ENCODE measurements at regions of chr3 and their contacts with region 1.

Region 1: DNA sequence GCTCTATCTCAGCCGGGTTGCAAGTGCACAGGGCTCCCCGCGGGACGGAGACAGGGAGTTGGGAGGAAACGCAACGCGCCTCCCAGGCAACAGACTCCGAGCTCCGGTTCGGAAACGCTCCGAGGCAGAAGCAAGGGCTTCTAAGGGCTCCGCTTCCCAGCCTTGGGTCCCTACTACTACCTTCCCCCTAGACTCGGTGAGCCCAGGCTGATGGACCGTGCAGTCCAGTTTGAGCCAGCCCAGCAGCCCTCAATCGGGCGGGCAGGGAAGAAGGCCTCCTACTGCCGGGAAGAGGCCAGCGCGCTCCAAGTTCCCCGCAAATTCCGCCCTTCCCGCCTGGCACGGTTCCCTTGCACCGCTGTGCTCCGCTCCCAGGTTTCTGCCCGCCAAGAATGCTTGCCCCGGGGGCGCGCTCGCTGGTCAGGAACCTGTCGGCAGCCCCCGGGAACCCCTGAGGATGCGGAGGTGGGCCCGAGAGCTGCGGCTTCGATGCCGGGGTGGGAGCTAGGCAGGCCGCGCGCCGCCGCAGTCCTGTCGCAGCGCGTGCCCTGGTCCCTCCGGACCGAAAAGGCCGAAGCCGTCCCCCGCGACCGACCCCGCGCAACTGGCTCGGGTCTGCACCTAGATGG is 728 bp downstream of the TRANK1 start:
- DNase-seq: peak; percentile 15
- H3K4me3 ChIP-seq: peak overlapping the region; percentile 60
- CTCF ChIP-seq: peak; percentile 14

Region 2: DNA sequence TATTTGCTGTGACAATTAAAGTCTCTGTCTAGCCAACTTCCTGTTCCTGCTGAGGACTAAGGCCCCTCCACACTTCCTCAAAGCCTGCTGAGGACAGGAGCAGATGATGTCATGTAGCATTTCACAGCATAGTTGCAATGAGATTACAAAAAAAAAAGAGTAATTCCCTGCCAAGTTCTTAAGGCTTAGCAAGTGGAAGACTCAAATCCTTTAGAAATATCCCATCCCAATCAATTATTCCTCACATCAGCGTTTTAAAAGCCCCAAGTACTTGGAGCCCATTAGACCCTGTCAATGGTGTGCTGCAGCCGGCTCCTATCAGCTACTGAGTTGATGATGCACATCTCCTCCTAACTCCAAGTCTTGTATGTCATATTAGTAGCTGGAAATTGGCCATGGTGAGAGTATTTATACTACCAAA is 51.0 kb before region 1 on chr3:
- in situ Hi-C with region 1: loop called (anchors 5 kb)
- DNase-seq: peak; percentile 33
- H3K4me3 ChIP-seq: no peak overlapping the region
- CTCF ChIP-seq: no peak

Region 3: DNA sequence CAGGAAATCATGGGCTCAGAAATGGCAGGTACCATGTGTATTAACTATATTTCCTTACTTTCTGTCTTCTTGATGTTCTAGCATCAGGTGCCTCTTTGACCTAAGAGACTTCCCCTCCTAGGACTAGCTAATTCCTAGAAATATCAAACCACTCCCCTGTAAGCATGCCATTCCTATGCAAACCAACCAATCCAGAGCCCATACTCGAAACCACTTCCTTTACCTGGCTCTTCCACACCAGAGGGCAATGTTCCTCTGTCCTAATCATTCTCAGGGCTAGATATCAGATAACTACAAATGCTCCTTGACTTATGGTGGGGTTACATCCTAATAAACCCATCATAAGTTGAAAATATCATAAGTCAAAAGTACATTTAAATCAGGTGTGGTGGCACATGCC is 29.6 kb after region 1 on chr3:
- in situ Hi-C with region 1: no loop called
- DNase-seq: no peak
- H3K4me3 ChIP-seq: no peak overlapping the region
- CTCF ChIP-seq: no peak